Naive thymus-derived CD4-positive, alpha-beta T cell (primary cell): ENCODE measurements at regions of chr4 and their contacts with region 1.

Region 1: DNA sequence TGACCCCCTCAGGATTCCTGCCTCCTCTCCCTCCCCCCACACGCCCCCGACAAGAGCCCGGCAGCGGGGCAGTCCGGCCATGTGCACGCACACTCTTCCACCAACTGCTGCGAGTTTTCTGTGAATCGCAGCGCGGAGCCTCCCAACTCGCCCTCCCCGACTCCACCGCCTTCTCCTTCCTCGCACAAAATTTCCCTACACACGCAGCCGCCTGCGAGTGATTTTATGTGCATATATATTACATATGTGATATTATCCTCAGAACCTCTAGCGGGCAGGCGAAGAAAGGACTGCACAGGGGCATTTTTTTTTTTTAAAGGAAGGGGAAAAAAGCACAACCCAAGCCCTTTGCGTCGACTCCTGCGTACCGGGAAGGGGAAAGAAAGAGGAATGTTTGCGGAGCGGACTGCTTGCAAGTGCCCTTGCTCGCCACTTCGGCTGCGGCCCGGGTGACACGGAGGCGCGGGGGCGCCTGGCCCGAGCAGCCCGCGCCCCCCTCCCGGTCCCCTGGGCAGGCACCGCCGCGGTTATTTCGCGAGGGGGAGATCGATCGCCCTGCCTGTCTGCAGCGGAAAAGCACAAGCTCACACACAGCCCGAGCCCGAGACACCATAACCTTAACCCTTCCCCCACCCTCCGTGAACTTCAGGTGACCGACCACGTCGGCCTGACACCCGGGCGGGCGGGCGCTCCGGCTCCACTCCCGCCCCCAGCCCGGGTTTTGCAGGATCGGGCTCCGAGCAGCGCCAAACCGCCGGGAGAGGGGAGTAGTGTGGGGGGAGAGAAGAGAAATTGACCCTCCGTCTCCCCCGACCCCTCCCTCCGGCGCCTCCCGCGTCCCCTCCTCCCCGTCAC is 2.3 kb downstream of the ZNF827 start:
- DNase-seq: peak; percentile 35 to 71 (median 66)
- ATAC-seq: peak; percentile 70
- H3K4me3 ChIP-seq: peak overlapping the region; percentile 77
- H3K4me3 Mint-ChIP-seq: peak overlapping the region; percentile 92 to 100 (median 95)
- H3K27ac ChIP-seq: peak overlapping the region; percentile 68
- H3K27ac Mint-ChIP-seq: peak overlapping the region; percentile 87 to 98 (median 93)
- H3K4me1 ChIP-seq: peaks cover 0 to 13% of the 10 kb centered on the region in 2 donors
- H3K4me1 Mint-ChIP-seq: peaks cover 26 to 49% (median 40%) of the 10 kb centered on the region in 7 donors
- H3K27me3 ChIP-seq: no peaks in the 10 kb centered on the region
- H3K27me3 Mint-ChIP-seq: peaks cover 0 to 8% (median 0%) of the 10 kb centered on the region in 5 donors

Region 2: GRCh38 chr4:144174401-144175067 is 1761.8 kb before region 1 on chr4:
- CTCF ChIA-PET with region 1: no interaction called
- POLR2A ChIA-PET with region 1: no interaction called
- intact Hi-C with region 1: loop called in 1 of 2 experiments (anchors 5 kb)
- DNase-seq: peak in 7 of 9 donors; percentile 10 to 62 (median 45)
- ATAC-seq: peak; percentile 63
- H3K4me3 ChIP-seq: no peak overlapping the region
- H3K4me3 Mint-ChIP-seq: peak overlapping the region in 1 of 10 donors; percentile 44
- H3K27ac ChIP-seq: no peak overlapping the region
- H3K27ac Mint-ChIP-seq: peak overlapping the region in 3 of 9 donors; percentile 25 to 84 (median 41)
- H3K4me1 ChIP-seq: peaks cover 0 to 3% of the 10 kb centered on the region in 2 donors
- H3K4me1 Mint-ChIP-seq: peaks cover 0 to 29% (median 4%) of the 10 kb centered on the region in 7 donors
- H3K27me3 ChIP-seq: no peaks in the 10 kb centered on the region
- H3K27me3 Mint-ChIP-seq: peaks cover 0 to 11% (median 9%) of the 10 kb centered on the region in 5 donors

Region 3: DNA sequence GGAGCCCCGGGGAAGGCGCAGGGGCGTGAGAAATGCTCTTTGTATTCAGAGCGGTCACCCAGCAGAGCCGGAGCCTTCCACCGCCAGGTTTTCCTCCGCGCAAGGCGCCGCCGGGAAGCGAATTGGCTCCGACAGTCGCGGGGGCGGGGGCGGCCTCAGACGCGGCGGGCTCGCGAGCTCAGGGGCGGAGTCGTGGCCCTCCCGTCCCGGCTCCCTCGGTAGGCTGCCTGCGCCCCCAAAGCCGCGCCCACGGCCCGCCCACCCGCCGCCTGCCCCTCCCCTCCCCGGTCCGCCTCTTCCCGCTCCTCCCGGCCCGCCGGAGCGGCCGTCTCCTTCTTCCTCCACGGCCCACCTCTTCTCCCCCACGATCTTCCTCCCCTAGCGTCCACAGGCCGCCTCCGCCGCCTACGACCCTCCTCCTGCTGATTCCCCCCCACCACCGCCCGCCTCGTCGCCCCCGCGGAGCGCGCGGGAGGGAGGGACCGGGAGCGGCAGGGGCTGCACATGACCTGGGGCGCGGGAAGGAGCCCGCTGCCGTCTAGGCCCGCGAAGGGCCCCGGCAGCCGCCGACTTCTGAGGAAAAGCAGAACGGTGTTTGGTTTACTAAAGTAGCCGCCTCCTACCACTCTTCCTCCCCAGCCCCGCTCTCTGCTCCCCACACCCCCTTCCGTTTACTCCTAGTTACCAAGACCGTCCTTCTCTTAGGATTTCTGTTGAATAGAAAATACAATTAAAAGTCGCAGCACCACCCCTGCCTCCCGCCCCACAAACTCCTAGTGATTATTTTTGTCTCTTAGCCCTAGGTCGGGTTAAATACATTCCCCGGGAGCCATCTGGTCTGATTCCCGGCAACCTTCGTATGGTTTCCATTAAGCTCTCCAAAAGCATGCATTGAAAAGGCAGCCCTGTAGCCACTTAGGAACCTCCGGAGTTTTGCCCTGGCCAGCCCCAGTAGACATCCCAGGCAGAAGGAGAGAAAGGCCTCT is 203.2 kb before region 1 on chr4:
- CTCF ChIA-PET with region 1: no interaction called
- POLR2A ChIA-PET with region 1: interaction called, 5 read pairs
- intact Hi-C with region 1: loop called (anchors 1 to 2 kb)
- DNase-seq: peak; percentile 56 to 87 (median 68)
- ATAC-seq: peak; percentile 97
- H3K4me3 ChIP-seq: peak overlapping the region; percentile 59
- H3K4me3 Mint-ChIP-seq: peak overlapping the region; percentile 72 to 86 (median 82)
- H3K27ac ChIP-seq: peak overlapping the region; percentile 63
- H3K27ac Mint-ChIP-seq: peak overlapping the region in 5 of 9 donors; percentile 50 to 77 (median 62)
- H3K4me1 ChIP-seq: peaks cover 0 to 4% of the 10 kb centered on the region in 2 donors
- H3K4me1 Mint-ChIP-seq: peaks cover 0 to 13% (median 9%) of the 10 kb centered on the region in 7 donors
- H3K27me3 ChIP-seq: no peaks in the 10 kb centered on the region
- H3K27me3 Mint-ChIP-seq: peaks cover 0 to 11% (median 3%) of the 10 kb centered on the region in 5 donors

Region 4: GRCh38 chr4:145840162-145840768 is 96.1 kb before region 1 on chr4:
- CTCF ChIA-PET with region 1: interaction called, 3 read pairs
- POLR2A ChIA-PET with region 1: no interaction called
- intact Hi-C with region 1: loop called (anchors 1 to 2 kb)
- DNase-seq: peak in 6 of 9 donors; percentile 7 to 34 (median 24)
- ATAC-seq: peak; percentile 89
- H3K4me3 ChIP-seq: no peak overlapping the region
- H3K4me3 Mint-ChIP-seq: no peak overlapping the region
- H3K27ac ChIP-seq: no peak overlapping the region
- H3K27ac Mint-ChIP-seq: peak overlapping the region in 2 of 9 donors; percentile 31 to 42
- H3K4me1 ChIP-seq: peaks cover 3 to 10% of the 10 kb centered on the region in 2 donors
- H3K4me1 Mint-ChIP-seq: peaks cover 15 to 29% (median 27%) of the 10 kb centered on the region in 7 donors
- H3K27me3 ChIP-seq: no peaks in the 10 kb centered on the region
- H3K27me3 Mint-ChIP-seq: no peaks in the 10 kb centered on the region

Region 5: GRCh38 chr4:145956288-145956890 is 20.0 kb after region 1 on chr4:
- CTCF ChIA-PET with region 1: interaction called, 4 read pairs
- POLR2A ChIA-PET with region 1: interaction called, 4 read pairs
- intact Hi-C with region 1: loop called in 1 of 2 experiments (anchors 1 kb)
- DNase-seq: peak in 7 of 9 donors; percentile 22 to 43 (median 28)
- ATAC-seq: peak; percentile 70
- H3K4me3 ChIP-seq: no peak overlapping the region
- H3K4me3 Mint-ChIP-seq: no peak overlapping the region
- H3K27ac ChIP-seq: no peak overlapping the region
- H3K27ac Mint-ChIP-seq: no peak overlapping the region
- H3K4me1 ChIP-seq: no peaks in the 10 kb centered on the region
- H3K4me1 Mint-ChIP-seq: peaks cover 0 to 4% (median 0%) of the 10 kb centered on the region in 7 donors
- H3K27me3 ChIP-seq: no peaks in the 10 kb centered on the region
- H3K27me3 Mint-ChIP-seq: peaks cover 0 to 9% (median 5%) of the 10 kb centered on the region in 5 donors

Region 6: GRCh38 chr4:147617173-147617840 is 1680.9 kb after region 1 on chr4 and contains the start of gene TMEM184C:
- CTCF ChIA-PET with region 1: no interaction called
- POLR2A ChIA-PET with region 1: no interaction called
- intact Hi-C with region 1: loop called in 1 of 2 experiments (anchors 1 kb)
- DNase-seq: peak; percentile 97 to 99 (median 98)
- ATAC-seq: peak; percentile 97
- H3K4me3 ChIP-seq: peak within 1 kb of the TSS; percentile 89
- H3K4me3 Mint-ChIP-seq: peak within 1 kb of the TSS; percentile 86 to 98 (median 94)
- H3K27ac ChIP-seq: peak within 1 kb of the TSS; percentile 87
- H3K27ac Mint-ChIP-seq: peak within 1 kb of the TSS; percentile 92 to 99 (median 95)
- H3K4me1 ChIP-seq: peaks cover 21 to 30% of the 10 kb centered on the region in 2 donors
- H3K4me1 Mint-ChIP-seq: peaks cover 21 to 48% (median 33%) of the 10 kb centered on the region in 7 donors
- H3K27me3 ChIP-seq: no peaks in the 10 kb centered on the region
- H3K27me3 Mint-ChIP-seq: peaks cover 0 to 22% (median 4%) of the 10 kb centered on the region in 5 donors
- total RNA-seq, gene TMEM184C: 13.7 to 27.4 (median 19.0) TPM